GM12878 (cell line): ENCODE measurements at regions of chr9 and their contacts with region 1.

Region 1: DNA sequence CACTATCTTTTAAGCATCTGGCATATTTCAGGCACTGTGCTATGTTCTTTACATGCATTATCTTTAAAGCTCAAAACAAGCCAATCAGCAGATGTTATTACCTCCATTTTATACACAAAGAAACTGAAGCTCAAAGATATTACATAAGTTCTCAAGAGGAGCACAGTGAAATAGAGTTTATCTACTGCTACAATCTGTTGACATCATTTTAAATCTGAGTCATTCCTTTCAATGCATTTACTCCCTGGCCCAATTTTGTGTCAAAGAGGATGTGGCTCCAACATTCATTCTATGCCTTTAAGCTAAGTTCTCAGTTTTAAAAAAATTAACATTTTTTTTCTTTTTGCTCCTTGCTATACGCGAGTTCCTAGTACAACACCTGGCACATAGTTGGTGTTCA is 486.3 kb upstream of the ZNF462 start:
- DNase-seq: no peak
- ATAC-seq: peak; percentile 70
- H3K4me3 ChIP-seq: no peak overlapping the region
- H3K27ac ChIP-seq: no peak overlapping the region
- H3K4me1 ChIP-seq: no peaks in the 10 kb centered on the region
- H3K27me3 ChIP-seq: no peaks in the 10 kb centered on the region
- CTCF ChIP-seq: no peak
- EP300 ChIP-seq: no peak
- POLR2A ChIP-seq: no peak
- RAD21 ChIP-seq: no peak

Region 2: GRCh38 chr9:106467113-106467864 is 90.6 kb after region 1 on chr9:
- CTCF ChIA-PET with region 1: no interaction called
- POLR2A ChIA-PET with region 1: no interaction called
- RAD21 ChIA-PET with region 1: no interaction called
- SMC1A ChIA-PET with region 1: no interaction called
- in situ Hi-C with region 1: no loop called
- intact Hi-C with region 1: no loop called
- DNase-seq: no peak
- ATAC-seq: peak; percentile 58
- H3K4me3 ChIP-seq: no peak overlapping the region
- H3K27ac ChIP-seq: peak overlapping the region; percentile 6; the same call in 1 of the 2 replicates
- H3K4me1 ChIP-seq: peaks cover 6% of the 10 kb centered on the region; the same call in 1 of the 2 replicates
- H3K27me3 ChIP-seq: no peaks in the 10 kb centered on the region
- CTCF ChIP-seq: no peak
- EP300 ChIP-seq: no peak
- POLR2A ChIP-seq: no peak
- RAD21 ChIP-seq: no peak

Region 3: GRCh38 chr9:107208121-107208520 is 831.4 kb after region 1 on chr9:
- CTCF ChIA-PET with region 1: no interaction called
- POLR2A ChIA-PET with region 1: interaction called, 10 read pairs
- RAD21 ChIA-PET with region 1: no interaction called
- SMC1A ChIA-PET with region 1: no interaction called
- in situ Hi-C with region 1: no loop called
- intact Hi-C with region 1: no loop called
- DNase-seq: no peak
- ATAC-seq: peak; percentile 70
- H3K4me3 ChIP-seq: no peak overlapping the region
- H3K27ac ChIP-seq: no peak overlapping the region
- H3K4me1 ChIP-seq: peaks cover 1% of the 10 kb centered on the region; the same call in 1 of the 2 replicates
- H3K27me3 ChIP-seq: no peaks in the 10 kb centered on the region
- CTCF ChIP-seq: no peak
- EP300 ChIP-seq: no peak
- POLR2A ChIP-seq: no peak
- RAD21 ChIP-seq: no peak